ENCODE measurements at regions of chr1 and their contacts with region 1.

Region 1: DNA sequence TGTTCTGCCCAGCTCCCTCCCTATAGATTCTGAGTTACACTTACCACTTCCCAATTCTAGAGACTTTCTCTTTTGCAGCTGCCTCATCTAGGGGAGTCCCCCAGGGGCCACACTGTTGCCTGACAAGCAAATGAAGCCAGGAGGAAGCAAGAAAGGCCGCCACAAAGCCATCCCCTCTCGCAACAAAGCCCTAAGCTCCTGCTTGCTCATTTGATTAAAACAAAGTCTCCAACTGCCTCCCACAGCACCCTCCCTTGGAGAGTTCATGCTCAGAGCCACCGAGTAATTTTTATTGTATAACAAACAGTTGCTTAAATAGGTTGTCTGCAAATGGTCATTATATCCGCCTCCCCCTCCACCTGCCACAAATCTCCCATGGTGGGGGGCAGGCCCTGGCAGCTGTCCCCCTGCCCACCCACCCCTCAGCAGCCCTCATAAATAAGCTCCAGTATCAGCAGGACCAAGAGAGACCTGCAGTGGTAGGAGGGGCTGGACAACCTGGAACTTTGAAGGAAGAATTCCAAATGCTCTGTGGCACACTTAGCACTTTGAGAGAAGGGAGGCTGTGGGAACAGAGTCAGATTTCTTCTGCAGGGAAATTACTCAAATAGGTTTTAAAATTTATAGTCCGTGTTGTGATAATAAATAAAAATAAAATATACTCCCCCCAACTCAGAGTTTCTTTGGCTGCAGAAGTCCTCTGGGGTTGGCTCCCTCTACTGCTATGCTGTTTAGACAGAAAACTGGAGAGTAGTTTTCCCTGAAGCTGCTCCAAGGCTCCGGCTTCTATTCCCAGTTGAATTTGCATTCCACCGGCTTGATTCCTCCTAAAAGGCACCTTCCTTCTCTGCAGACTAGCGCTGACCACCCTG is 237.5 kb downstream of the TTLL7 start:
- DNase-seq: no peak
- H3K4me3 ChIP-seq: no peak overlapping the region
- H3K27ac ChIP-seq: peak overlapping the region in 1 of 2 experiments; percentile 91; a peak in 2 of 4 replicates
- H3K4me1 ChIP-seq: peaks cover 0 to 36% of the 10 kb centered on the region in 2 experiments; a peak in 2 of 4 replicates
- H3K27me3 ChIP-seq: peaks cover 6% of the 10 kb centered on the region
- CTCF ChIP-seq: no peak
- EP300 ChIP-seq: no peak
- RAD21 ChIP-seq: peak; percentile 41

Region 2: GRCh38 chr1:83692524-83693381 is 68.7 kb before region 1 on chr1:
- CTCF ChIA-PET with region 1: interaction called, 4 read pairs
- POLR2A ChIA-PET with region 1: interaction called, 31 read pairs
- DNase-seq: peak; percentile 55
- H3K4me3 ChIP-seq: peak overlapping the region; percentile 40 to 64
- H3K27ac ChIP-seq: peak overlapping the region in 1 of 2 experiments; percentile 97; a peak in 2 of 4 replicates
- H3K4me1 ChIP-seq: peaks cover 8 to 41% of the 10 kb centered on the region in 2 experiments; a peak in 2 of 4 replicates
- H3K27me3 ChIP-seq: no peaks in the 10 kb centered on the region
- CTCF ChIP-seq: no peak
- EP300 ChIP-seq: peak in 1 of 2 experiments; percentile 77; a peak in 2 of 4 replicates
- RAD21 ChIP-seq: 0 out of 2 replicates have a peak, but pooled peaks have one; percentile 47

Measured in SK-N-SH (cell line).